ENCODE measurements at regions of chr2 and their contacts with region 1.

Region 1: GRCh38 chr2:11863513-11864328 is 117.3 kb downstream of the LPIN1 start:
- H3K4me3 ChIP-seq: no peak overlapping the region
- H3K27ac ChIP-seq: no peak overlapping the region
- H3K4me1 ChIP-seq: no peaks in the 10 kb centered on the region
- CTCF ChIP-seq: peak; percentile 80

Region 2: GRCh38 chr2:11842336-11842735 is 21.4 kb before region 1 on chr2:
- CTCF ChIA-PET with region 1: interaction called, 12 read pairs
- POLR2A ChIA-PET with region 1: no interaction called
- H3K4me3 ChIP-seq: no peak overlapping the region
- H3K27ac ChIP-seq: no peak overlapping the region
- H3K4me1 ChIP-seq: no peaks in the 10 kb centered on the region
- CTCF ChIP-seq: no peak

Region 3: GRCh38 chr2:11955314-11955713 is 91.6 kb after region 1 on chr2:
- CTCF ChIA-PET with region 1: no interaction called
- POLR2A ChIA-PET with region 1: no interaction called
- H3K4me3 ChIP-seq: no peak overlapping the region
- H3K27ac ChIP-seq: no peak overlapping the region
- H3K4me1 ChIP-seq: no peaks in the 10 kb centered on the region
- CTCF ChIP-seq: no peak

Measured in HEK293 (cell line).